H1 (cell line): ENCODE measurements at regions of chr5 and their contacts with region 1.

Region 1: DNA sequence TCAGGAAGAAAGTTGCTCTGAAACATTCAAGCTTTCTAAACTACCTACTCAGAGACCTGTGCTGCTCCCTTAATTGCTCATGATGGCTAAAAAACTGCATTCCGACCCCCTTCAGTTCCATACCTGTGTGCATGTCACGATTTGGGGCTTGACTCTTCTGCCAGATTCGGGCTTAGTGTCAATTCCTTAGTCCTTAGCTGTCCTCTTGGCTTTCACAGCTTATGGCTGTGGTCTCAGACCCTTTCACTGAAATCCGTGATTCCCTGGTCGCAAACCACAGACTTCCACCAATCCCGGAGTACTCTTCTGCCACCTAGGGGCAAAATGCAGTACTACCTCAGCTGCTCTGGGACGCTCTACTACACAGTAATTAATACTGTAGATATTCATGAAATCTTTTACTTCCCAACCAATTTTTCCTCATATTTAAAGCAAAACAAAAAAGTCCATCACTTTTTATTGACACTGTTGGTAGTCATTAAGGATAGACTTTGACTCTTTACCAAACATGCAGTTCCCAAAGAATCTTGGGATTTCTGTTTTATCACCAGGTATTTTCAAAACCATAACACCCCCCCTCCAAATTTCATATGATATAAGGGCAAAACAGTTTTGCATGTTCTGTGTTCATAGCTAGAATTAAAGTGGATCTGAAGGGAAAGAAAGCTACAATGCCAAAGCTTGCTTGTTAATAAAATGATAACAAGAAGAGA is 617.4 kb downstream of the SLCO4C1 start:
- DNase-seq: peak; percentile 47 to 92
- H3K4me3 ChIP-seq: peak overlapping the region in 1 of 4 experiments; percentile 10; a peak in 2 of 8 replicates
- H3K27ac ChIP-seq: no peak overlapping the region
- H3K4me1 ChIP-seq: peaks cover 0 to 3% (median under 1%) of the 10 kb centered on the region in 4 experiments; a peak in 2 of 7 replicates
- H3K27me3 ChIP-seq: no peaks in the 10 kb centered on the region
- CTCF ChIP-seq: peak; percentile 58 to 86 (median 74)
- EP300 ChIP-seq: no peak
- POLR2A ChIP-seq: no peak
- RAD21 ChIP-seq: peak; percentile 90 to 93

Region 2: DNA sequence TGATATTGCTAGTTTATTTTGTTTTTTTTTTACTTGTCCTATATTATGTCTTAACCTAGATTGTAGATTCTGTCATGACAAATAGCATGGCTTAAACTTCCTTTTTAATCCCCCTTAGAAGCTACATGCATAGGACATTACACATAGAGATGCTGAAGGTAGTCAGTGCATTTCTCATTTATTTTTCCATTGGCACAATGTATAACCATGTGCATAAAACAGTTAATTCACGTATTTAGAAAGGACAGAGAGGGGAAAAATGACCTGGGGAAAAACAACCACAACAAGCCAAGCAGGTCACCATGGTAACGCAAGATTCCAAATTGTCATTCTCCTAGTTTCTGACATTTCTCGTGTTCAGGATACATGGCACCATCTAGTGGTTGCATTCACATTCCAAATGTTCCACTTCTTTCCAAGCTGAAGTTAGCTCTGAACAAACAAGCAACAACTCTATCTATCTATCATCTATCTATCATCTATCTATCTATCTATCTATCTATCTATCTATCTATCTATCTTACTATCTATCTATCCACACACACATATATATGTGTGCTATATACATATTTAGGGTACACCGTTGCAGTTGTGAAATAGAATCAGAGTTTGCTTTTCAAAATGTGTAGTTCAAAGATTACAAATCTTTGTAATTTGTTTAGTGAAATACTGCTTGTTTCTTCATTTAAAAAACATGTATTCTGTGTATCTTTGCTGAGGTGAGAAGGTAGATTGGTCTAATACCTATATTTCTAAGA is 288.3 kb before region 1 on chr5:
- CTCF ChIA-PET with region 1: interaction called, 10 read pairs
- POLR2A ChIA-PET with region 1: no interaction called
- DNase-seq: no peak
- H3K4me3 ChIP-seq: no peak overlapping the region
- H3K27ac ChIP-seq: no peak overlapping the region
- H3K4me1 ChIP-seq: no peaks in the 10 kb centered on the region
- H3K27me3 ChIP-seq: no peaks in the 10 kb centered on the region
- CTCF ChIP-seq: peak in 2 of 3 experiments; percentile 62 to 78; a peak in 3 of 4 replicates
- EP300 ChIP-seq: no peak
- POLR2A ChIP-seq: no peak
- RAD21 ChIP-seq: peak; percentile 85 to 86

Region 3: DNA sequence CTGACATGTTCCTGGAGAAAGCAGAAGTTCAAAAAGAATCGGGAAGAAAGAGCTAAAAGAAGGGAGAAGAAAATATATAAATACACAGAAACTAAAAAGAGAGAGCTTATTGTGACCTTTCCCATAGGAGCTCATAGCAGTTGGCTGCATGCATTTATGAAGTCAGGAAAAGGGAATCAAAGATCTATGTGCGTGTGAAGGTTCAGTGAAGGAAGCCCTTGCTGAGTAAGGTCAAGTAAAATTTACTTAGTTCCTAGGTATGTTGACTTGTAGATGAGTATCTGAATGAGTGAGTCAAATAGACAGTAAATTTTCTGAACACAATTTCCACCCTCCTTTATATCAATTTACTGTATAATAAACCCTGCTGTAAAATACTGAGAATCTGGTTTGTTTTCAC is 15.1 kb before region 1 on chr5:
- CTCF ChIA-PET with region 1: interaction called, 10 read pairs
- POLR2A ChIA-PET with region 1: no interaction called
- DNase-seq: no peak
- H3K4me3 ChIP-seq: no peak overlapping the region
- H3K27ac ChIP-seq: no peak overlapping the region
- H3K4me1 ChIP-seq: peaks cover 0 to 2% (median under 1%) of the 10 kb centered on the region in 4 experiments; a peak in 2 of 7 replicates
- H3K27me3 ChIP-seq: no peaks in the 10 kb centered on the region
- CTCF ChIP-seq: no peak
- EP300 ChIP-seq: no peak
- POLR2A ChIP-seq: no peak
- RAD21 ChIP-seq: no peak

Region 4: GRCh38 chr5:101811466-101811865 is 132.8 kb after region 1 on chr5:
- CTCF ChIA-PET with region 1: no interaction called
- POLR2A ChIA-PET with region 1: no interaction called
- DNase-seq: no peak
- H3K4me3 ChIP-seq: no peak overlapping the region
- H3K27ac ChIP-seq: no peak overlapping the region
- H3K4me1 ChIP-seq: no peaks in the 10 kb centered on the region
- H3K27me3 ChIP-seq: no peaks in the 10 kb centered on the region
- CTCF ChIP-seq: no peak
- EP300 ChIP-seq: no peak
- POLR2A ChIP-seq: no peak
- RAD21 ChIP-seq: no peak

Region 5: GRCh38 chr5:101878190-101878589 is 199.6 kb after region 1 on chr5:
- CTCF ChIA-PET with region 1: no interaction called
- POLR2A ChIA-PET with region 1: no interaction called
- DNase-seq: no peak
- H3K4me3 ChIP-seq: no peak overlapping the region
- H3K27ac ChIP-seq: no peak overlapping the region
- H3K4me1 ChIP-seq: no peaks in the 10 kb centered on the region
- H3K27me3 ChIP-seq: no peaks in the 10 kb centered on the region
- CTCF ChIP-seq: no peak
- EP300 ChIP-seq: no peak
- POLR2A ChIP-seq: no peak
- RAD21 ChIP-seq: no peak